Natural killer cell (primary cell): ENCODE measurements at regions of chr12 and their contacts with region 1.

Region 1: GRCh38 chr12:120971299-120972179 is 6.8 kb upstream of the HNF1A start:
- DNase-seq: peak in 1 of 2 donors; percentile 79
- ATAC-seq: peak; percentile 87 to 91 (median 88)
- H3K4me3 ChIP-seq: no peak overlapping the region
- H3K4me3 Mint-ChIP-seq: no peak overlapping the region
- H3K27ac ChIP-seq: no peak overlapping the region
- H3K27ac Mint-ChIP-seq: no peak overlapping the region
- H3K4me1 ChIP-seq: no peaks in the 10 kb centered on the region
- H3K4me1 Mint-ChIP-seq: peaks cover 0 to 5% of the 10 kb centered on the region in 2 donors
- H3K27me3 ChIP-seq: no peaks in the 10 kb centered on the region
- H3K27me3 Mint-ChIP-seq: no peaks in the 10 kb centered on the region
- CTCF ChIP-seq: peak; percentile 59

Region 2: DNA sequence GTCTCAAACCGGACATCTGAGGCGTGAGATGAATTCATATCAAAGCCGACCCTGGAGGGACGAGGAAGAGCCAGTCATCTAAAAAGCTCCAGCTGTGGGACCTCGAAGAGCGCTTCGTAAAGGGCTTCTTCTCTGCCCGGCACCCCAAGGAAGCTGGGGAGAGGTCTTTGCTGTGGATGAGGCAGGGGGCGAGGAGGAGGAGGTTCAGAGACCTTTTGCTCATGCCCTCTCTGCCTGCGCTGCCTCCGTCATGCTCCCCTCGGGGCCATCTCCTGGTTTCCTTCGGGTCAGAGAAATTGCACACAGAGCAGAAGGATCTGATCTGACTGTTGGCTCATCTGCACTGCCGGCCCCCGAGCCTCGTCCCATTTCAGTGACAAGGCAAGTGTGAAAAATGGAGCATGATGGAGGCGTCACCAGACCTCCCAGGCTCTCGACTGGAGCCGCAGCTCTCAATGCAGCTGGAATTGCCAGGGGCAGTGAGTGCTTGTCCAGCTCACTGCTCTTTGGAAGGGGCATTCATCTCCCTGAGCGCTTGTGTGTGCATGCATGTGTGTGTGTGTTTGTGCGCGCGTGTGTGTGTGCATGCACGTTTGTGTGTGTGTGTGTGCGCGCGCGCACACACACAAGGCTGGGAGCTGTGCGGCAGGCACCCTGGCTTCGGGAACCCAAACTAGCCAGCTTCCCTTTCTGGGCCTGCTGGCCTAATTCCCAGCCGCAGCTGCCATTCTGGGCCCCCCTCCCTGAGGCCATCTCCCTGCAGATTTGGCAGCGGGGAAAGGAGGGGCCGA is 321.9 kb before region 1 on chr12:
- intact Hi-C with region 1: loop called (anchors 2 kb)
- DNase-seq: no peak
- ATAC-seq: no peak
- H3K4me3 ChIP-seq: no peak overlapping the region
- H3K4me3 Mint-ChIP-seq: no peak overlapping the region
- H3K27ac ChIP-seq: no peak overlapping the region
- H3K27ac Mint-ChIP-seq: no peak overlapping the region
- H3K4me1 ChIP-seq: peaks cover 11% of the 10 kb centered on the region
- H3K4me1 Mint-ChIP-seq: peaks cover 12 to 14% of the 10 kb centered on the region in 2 donors
- H3K27me3 ChIP-seq: peaks cover 8% of the 10 kb centered on the region
- H3K27me3 Mint-ChIP-seq: peaks cover 36% of the 10 kb centered on the region in 2 donors
- CTCF ChIP-seq: peak; percentile 27